ENCODE measurements at regions of chr7 and their contacts with region 1.

Region 1: GRCh38 chr7:148623586-148624282 is 33.2 kb downstream of the C7orf33 start:
- DNase-seq: no peak
- ATAC-seq: no peak
- H3K4me3 ChIP-seq: no peak overlapping the region
- H3K27ac ChIP-seq: no peak overlapping the region
- H3K4me1 ChIP-seq: no peaks in the 10 kb centered on the region
- H3K27me3 ChIP-seq: no peaks in the 10 kb centered on the region
- CTCF ChIP-seq: no peak

Region 2: DNA sequence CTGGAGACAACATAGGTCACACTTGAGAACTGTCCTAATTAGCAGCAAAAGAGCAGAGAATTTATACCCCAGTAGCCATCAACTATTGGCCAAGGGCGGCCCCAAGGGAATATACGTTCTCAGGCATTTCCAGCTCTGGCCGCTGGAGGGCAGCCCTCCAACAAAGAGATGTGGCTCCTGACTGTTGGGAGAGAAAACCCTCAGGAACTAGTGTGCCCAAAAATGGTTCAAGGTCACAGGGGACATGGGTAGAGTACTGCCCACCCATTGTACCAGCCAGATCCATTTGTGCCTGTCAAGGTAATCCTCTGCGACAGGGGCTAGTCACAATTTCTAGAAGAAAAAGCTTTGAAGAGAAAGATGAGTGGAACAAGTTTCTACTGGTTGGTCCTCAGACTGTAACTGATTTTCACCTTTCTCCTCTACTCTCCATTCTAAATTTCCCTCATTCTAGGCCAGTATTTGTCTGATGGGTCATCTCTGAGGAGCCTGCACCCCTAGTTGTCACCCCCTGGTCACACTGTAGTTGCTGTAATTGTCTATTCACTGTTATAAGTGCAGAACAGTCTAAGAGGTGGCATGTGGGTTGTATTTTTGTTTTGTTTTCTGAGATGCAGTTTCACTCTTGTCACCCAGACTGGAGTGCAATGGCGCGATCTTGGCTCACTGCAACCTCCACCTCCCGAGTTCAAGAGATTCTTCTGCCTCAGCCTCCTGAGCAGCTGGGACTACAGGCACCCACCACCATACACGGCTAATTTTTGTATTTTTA is 47.9 kb before region 1 on chr7:
- CTCF ChIA-PET with region 1: no interaction called
- POLR2A ChIA-PET with region 1: no interaction called
- in situ Hi-C with region 1: loop called (anchors 10 kb)
- intact Hi-C with region 1: no loop called
- DNase-seq: peak; percentile 50
- ATAC-seq: peak; percentile 95
- H3K4me3 ChIP-seq: no peak overlapping the region
- H3K27ac ChIP-seq: no peak overlapping the region
- H3K4me1 ChIP-seq: no peaks in the 10 kb centered on the region
- H3K27me3 ChIP-seq: no peaks in the 10 kb centered on the region
- CTCF ChIP-seq: peak; percentile 94

Region 3: DNA sequence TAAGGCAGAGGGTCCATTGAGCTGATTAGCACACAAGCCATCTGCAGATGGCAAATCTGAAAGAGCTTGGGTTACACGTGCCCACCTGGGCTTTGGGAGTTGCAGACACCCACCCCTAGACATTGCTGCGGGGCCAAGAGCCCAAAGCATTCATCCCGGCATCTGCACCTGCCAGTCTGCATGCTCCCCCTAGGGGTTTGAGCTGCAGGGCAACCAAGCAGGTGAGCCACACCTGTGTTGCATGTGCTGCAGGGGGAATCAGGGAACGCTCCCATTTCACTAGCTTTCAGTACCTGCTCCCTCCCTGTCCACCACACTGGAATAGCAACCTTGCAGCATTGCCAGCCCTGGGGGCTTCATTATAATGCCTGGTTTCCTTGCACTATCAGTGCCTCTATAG is 12.0 kb before region 1 on chr7:
- CTCF ChIA-PET with region 1: no interaction called
- POLR2A ChIA-PET with region 1: no interaction called
- in situ Hi-C with region 1: no loop called
- intact Hi-C with region 1: no loop called
- DNase-seq: no peak
- ATAC-seq: no peak
- H3K4me3 ChIP-seq: no peak overlapping the region
- H3K27ac ChIP-seq: no peak overlapping the region
- H3K4me1 ChIP-seq: no peaks in the 10 kb centered on the region
- H3K27me3 ChIP-seq: peaks cover 24% of the 10 kb centered on the region
- CTCF ChIP-seq: no peak